ENCODE measurements at regions of chr3 and their contacts with region 1.

Region 1: DNA sequence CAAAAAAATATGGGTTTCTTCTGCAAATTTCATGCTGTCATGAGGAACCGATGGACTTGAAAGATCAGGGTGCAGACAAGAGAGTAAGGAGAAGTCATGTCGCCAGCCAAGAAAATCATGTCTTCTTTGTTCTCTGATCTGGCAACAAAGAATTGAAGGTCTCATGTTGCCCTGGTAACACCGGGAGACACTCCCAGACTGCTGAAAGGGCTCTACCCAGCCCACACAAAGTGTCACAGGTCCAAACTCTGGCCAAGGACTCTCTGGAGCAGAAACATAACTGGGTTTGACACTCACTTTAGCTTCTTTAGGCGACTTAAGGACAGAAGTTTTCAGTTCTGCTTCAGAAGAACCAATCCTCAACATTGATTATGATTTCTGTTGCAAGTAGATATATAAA is 42.9 kb downstream of the SIDT1 start:
- DNase-seq: no peak
- H3K4me3 ChIP-seq: no peak overlapping the region
- CTCF ChIP-seq: no peak

Region 2: DNA sequence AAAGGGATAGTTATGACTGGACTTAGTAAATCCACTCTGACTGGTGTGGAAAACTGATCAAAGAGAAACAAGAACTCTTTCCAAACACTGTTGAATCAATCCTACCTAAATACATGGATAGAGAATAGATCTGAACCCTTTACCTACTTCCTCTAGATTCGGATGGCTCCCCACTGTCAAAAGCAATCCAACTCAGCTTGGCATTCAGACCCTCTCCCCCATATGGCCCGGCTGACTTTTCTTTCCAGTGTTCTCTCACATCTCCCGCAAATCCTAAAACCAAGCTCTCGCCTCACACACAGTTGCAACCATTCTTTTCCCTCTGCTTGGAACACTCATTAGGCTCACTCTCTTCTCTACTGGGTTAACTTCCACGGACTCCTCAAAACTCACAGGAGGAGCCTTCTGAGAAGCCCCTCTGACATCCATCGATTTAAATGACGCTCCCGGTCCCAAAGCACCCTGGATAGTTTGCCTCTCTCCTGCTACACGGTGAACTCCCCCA is 60.9 kb before region 1 on chr3:
- CTCF ChIA-PET with region 1: interaction called, 10 read pairs
- POLR2A ChIA-PET with region 1: no interaction called
- DNase-seq: no peak
- H3K4me3 ChIP-seq: peak overlapping the region; percentile 91
- CTCF ChIP-seq: no peak

Region 3: DNA sequence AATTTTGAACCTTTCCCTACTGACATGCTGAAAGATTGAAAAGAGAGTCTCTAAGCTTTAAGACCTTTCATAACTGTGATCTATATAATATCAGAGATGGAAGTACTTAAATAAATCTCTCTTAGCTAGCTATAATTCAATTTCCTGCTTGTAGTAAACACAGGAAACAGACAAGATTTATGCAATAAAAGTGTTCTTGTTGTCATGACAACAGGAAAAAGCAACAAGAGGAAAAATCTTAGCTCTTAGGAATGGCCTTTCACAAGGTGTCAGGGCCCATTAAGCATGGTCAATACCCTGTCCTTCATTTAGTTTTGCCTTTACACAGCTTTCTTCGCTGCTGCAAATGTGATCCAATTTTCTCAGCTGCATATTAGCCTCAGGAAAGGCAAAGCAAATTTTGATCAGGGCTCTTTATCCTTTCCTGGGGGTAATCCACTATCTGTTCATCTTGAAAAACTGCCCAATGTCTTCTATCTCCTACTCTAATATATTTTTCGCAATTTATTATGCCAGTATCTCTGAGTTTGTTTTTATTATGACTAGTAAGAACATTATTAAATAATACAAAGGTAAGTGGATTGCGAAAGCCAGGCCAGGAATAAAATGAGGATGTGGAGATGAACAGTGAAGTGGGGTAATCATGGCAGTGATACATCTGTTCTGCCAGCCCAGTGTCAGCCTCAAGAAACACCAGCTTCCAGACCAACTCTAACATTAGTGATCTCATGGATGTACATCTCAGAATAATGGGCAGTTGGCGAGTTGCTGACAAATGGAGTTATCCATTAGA is 14.2 kb before region 1 on chr3:
- CTCF ChIA-PET with region 1: interaction called, 12 read pairs
- POLR2A ChIA-PET with region 1: no interaction called
- DNase-seq: no peak
- H3K4me3 ChIP-seq: no peak overlapping the region
- CTCF ChIP-seq: no peak

Region 4: DNA sequence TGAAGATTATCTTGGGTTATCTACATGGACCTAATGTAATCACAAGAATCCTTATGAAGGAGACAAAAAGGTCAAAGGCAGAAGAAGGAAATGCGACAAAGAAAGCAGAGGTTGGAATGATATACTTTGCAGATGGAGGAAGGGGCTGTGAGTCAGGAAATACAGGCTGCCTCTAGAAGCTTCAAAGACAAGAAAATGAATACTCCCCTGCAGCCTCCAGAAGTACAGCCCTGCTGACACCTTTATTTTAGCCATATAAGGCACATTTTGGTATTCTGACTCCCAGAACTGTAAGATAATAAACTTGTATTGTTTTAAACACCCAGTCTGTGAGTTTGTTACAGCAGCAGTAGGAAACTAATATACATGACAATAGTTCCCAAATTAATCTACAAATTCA is 15.8 kb after region 1 on chr3:
- CTCF ChIA-PET with region 1: interaction called, 13 read pairs
- POLR2A ChIA-PET with region 1: no interaction called
- DNase-seq: no peak
- H3K4me3 ChIP-seq: no peak overlapping the region
- CTCF ChIP-seq: no peak

Region 5: DNA sequence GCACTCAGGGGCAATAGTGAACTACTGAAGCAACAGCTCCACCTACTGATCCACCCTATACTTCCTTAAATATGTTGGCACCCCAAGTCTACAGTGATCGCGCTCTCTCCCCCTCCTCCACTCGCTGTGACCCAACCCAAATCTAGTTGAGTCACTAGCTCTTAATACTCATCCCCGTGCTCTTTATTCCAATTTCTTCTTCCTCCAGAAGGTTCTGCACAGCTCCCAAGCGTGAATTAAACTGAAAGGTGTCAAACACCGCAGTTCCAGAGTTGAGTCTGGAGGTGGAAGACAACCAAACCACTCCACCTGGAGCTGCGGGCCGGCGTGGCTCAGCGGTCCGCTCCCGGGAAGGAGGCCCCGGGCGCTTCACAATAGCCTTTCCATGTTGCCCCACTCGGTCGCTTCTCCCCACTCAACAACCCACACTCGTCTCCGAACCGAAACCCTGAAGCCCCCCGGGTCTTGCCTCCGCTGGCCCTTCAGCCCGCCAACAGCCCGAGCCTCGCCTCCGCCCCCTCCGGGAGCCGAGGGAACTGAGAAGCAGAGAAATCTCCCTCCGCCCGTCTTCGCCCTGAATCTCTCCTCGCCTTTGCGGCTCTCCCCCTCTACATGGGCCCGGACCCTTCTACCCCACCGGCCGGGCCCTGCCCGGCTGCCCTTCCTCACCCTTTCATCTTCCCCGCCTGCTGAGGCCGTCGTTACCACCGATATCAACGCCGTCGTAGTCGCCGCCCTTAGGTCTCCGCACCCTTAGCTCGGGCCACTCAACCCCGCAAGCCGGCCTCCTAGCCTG is 170.3 kb after region 1 on chr3:
- CTCF ChIA-PET with region 1: no interaction called
- POLR2A ChIA-PET with region 1: no interaction called
- DNase-seq: peak; percentile 68
- H3K4me3 ChIP-seq: peak overlapping the region; percentile 90
- CTCF ChIP-seq: peak; percentile 73

Measured in AG04449 (cell line).